Activated CD4-positive, alpha-beta T cell treated with anti-CD3 and anti-CD28 coated beads for 36 hours (primary cell): ENCODE measurements at regions of chr16 and their contacts with region 1.

Region 1: GRCh38 chr16:58906981-58907715 is 173.0 kb upstream of the GOT2 start:
- DNase-seq: no peak
- ATAC-seq: no peak
- H3K4me3 Mint-ChIP-seq: no peak overlapping the region
- H3K27ac Mint-ChIP-seq: no peak overlapping the region
- H3K4me1 Mint-ChIP-seq: no peaks in the 10 kb centered on the region
- H3K27me3 Mint-ChIP-seq: no peaks in the 10 kb centered on the region

Region 2: GRCh38 chr16:58717994-58718393 is 189.2 kb before region 1 on chr16:
- CTCF ChIA-PET with region 1: no interaction called
- POLR2A ChIA-PET with region 1: no interaction called
- intact Hi-C with region 1: no loop called
- DNase-seq: no peak
- ATAC-seq: no peak
- H3K4me3 Mint-ChIP-seq: no peak overlapping the region
- H3K27ac Mint-ChIP-seq: no peak overlapping the region
- H3K4me1 Mint-ChIP-seq: no peaks in the 10 kb centered on the region
- H3K27me3 Mint-ChIP-seq: no peaks in the 10 kb centered on the region

Region 3: GRCh38 chr16:58923094-58923493 is 15.9 kb after region 1 on chr16:
- CTCF ChIA-PET with region 1: no interaction called
- POLR2A ChIA-PET with region 1: no interaction called
- intact Hi-C with region 1: loop called (anchors 1 kb)
- DNase-seq: no peak
- ATAC-seq: no peak
- H3K4me3 Mint-ChIP-seq: no peak overlapping the region
- H3K27ac Mint-ChIP-seq: no peak overlapping the region
- H3K4me1 Mint-ChIP-seq: no peaks in the 10 kb centered on the region
- H3K27me3 Mint-ChIP-seq: no peaks in the 10 kb centered on the region